ENCODE measurements at regions of chr6 and their contacts with region 1.

Region 1: GRCh38 chr6:134174672-134175198 is 122.3 kb upstream of the SLC2A12 start:
- DNase-seq: peak; percentile 94 to 97 (median 95)
- ATAC-seq: peak; percentile 87 to 95 (median 89)
- H3K4me3 ChIP-seq: peak overlapping the region; percentile 72 to 96 (median 80)
- H3K27ac ChIP-seq: peak overlapping the region; percentile 96 to 99 (median 98)
- H3K4me1 ChIP-seq: peaks cover 0 to 68% (median 45%) of the 10 kb centered on the region in 12 donors
- H3K27me3 ChIP-seq: no peaks in the 10 kb centered on the region
- CTCF ChIP-seq: no peak
- POLR2A ChIP-seq: peak; percentile 88 to 99

Region 2: DNA sequence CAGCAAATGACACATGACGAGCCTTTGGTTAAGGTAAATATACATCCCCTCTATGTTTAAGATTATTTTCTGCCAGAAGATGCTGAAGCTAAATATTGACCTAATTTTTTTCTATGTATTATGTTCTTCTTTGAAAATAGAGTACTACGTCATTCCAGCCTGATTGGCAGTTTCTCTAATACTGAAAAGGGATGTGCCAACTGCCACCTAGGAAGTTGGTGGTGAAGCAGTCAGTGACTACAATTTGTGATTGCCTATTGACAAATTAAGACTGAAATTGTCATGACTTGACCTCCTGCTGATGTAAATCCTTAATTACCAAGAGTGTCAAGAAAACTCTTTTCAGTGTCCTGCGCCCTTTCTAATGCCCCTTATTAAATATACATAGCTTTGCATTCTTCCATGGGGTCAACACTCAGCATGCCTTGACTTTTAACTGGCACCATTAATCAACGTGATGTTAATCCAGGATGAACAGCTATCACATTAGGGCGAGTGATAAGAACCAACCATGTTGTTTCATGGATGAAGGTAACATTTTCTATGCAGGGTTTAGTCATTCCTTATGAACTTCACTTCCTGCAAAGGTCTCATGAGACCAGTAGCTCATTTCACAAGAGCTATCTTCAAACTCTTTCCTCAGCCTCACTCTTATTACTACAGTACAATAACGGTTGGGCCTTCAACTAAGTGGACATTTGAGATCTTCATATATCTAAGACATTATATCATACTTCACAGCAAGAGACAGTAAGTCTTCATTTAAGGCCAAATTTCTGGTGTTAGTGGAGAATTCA is 165.6 kb after region 1 on chr6:
- intact Hi-C with region 1: loop called in 8 of 10 experiments (anchors 1 to 10 kb)
- DNase-seq: no peak
- ATAC-seq: no peak
- H3K4me3 ChIP-seq: no peak overlapping the region
- H3K27ac ChIP-seq: no peak overlapping the region
- H3K4me1 ChIP-seq: peaks cover 0 to 28% (median 7%) of the 10 kb centered on the region in 12 donors
- H3K27me3 ChIP-seq: no peaks in the 10 kb centered on the region
- CTCF ChIP-seq: no peak
- POLR2A ChIP-seq: no peak

Region 3: DNA sequence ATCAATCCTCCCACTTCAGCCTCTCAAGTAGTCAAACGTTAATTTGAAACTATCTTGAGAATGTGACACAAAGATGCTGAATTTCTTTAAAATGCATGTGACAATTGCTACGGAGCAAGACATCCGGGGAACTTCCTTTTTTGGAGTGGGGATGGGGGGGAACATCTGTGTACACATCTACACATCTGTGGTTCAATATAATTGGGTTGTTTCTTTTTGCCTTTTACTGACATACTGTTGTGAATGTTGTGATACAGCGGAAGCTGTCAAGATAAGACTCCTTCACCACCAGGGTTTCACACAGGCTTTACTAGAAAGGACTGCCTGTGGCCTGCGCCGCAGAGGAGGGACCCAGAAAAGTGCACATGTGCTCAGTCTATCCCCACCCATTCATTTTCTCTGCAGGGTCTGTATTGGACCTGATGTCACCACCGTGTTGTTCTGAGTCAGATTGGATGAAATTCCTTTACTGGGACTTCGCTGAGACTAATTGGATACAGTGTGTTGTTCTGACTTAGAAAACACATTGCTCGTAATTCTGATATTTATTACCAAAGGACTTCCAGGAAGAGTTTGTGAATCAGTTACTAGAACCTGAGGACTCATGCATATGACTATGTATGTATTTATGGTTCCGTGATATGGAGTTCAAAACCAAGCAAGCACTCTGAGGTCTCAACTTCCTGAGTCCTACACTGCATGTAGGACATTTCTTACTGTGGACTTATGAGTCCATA is 241.9 kb after region 1 on chr6:
- intact Hi-C with region 1: loop called in 1 of 10 experiments (anchors 10 kb)
- DNase-seq: no peak
- ATAC-seq: no peak
- H3K4me3 ChIP-seq: no peak overlapping the region
- H3K27ac ChIP-seq: peak overlapping the region in 2 of 12 donors; percentile 38 to 78
- H3K4me1 ChIP-seq: peaks cover 0 to 41% (median 2%) of the 10 kb centered on the region in 12 donors
- H3K27me3 ChIP-seq: no peaks in the 10 kb centered on the region
- CTCF ChIP-seq: no peak
- POLR2A ChIP-seq: no peak

Region 4: GRCh38 chr6:134537146-134537555 is 362.4 kb after region 1 on chr6:
- intact Hi-C with region 1: loop called in 4 of 10 experiments (anchors 5 to 10 kb)
- DNase-seq: no peak
- ATAC-seq: no peak
- H3K4me3 ChIP-seq: no peak overlapping the region
- H3K27ac ChIP-seq: no peak overlapping the region
- H3K4me1 ChIP-seq: peaks cover 3 to 38% (median 14%) of the 10 kb centered on the region in 12 donors
- H3K27me3 ChIP-seq: no peaks in the 10 kb centered on the region
- CTCF ChIP-seq: no peak
- POLR2A ChIP-seq: no peak

Region 5: DNA sequence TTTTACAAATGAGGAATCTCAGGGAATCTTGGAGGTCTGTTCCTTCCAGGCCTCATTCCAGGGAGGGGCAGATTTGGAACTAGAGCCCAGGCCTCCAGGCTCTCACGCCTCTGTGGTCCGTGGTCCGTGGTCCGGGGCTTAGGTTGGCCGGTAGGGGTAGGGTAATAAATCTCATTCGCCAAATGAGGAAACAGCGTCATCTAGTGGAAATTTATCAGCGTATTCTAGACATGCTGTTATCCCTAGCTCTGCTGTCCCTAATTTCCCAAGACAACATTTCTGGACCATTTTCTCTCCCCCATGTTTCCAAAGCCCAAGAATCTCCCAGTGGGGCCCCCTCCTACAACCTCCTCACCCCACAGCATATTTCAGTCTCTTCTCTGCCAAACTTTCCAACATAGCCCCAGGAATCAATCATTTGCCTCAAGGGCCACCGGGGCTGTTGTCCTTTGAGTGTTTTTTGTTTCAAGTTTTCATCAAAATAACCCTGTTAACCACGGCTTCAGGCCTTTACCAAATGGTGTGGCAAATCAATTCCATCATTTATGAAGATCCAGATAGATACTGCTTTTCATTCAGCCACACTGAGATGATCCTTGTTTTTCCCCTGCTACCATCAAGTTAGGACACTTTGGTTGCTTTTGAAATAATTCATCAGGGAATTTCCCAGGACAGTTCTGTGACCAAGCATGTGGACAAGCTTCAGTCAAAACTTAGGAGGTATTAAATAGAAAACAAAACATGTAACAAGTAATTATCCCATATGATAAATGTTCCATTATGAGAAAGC is 648.4 kb after region 1 on chr6:
- intact Hi-C with region 1: loop called (anchors 1 to 5 kb)
- DNase-seq: peak in 4 of 5 donors; percentile 28 to 55 (median 38)
- ATAC-seq: peak; percentile 84 to 92 (median 90)
- H3K4me3 ChIP-seq: no peak overlapping the region
- H3K27ac ChIP-seq: no peak overlapping the region
- H3K4me1 ChIP-seq: peaks cover 0 to 19% (median 1%) of the 10 kb centered on the region in 12 donors
- H3K27me3 ChIP-seq: no peaks in the 10 kb centered on the region
- CTCF ChIP-seq: peak; percentile 85 to 94 (median 88)
- POLR2A ChIP-seq: no peak

Measured in heart left ventricle (tissue), 16 donors.